Vagina (tissue), 2 donors: ENCODE measurements at regions of chr20 and their contacts with region 1.

Region 1: DNA sequence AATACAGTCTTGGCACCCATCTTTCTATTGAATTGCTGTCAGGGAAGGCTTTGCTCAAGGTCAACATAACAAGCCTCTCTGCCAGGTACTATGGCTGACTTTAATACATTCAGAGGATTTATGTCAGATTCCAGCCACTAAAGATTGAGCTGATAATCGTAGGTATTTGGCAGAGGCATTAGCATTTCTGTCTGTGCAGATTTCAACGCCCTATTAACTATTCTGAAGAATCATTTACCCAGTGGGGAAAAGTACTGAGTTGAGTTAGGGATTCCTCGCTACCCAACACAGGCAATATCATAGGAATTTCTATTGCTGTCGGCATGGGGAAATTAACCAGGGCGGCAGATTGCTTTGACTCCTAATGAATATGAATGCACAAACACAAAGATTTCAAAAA is 233.7 kb upstream of the SPTLC3 start:
- DNase-seq: no peak
- H3K4me3 ChIP-seq: no peak overlapping the region
- H3K27ac ChIP-seq: no peak overlapping the region
- H3K4me1 ChIP-seq: no peaks in the 10 kb centered on the region
- H3K27me3 ChIP-seq: no peaks in the 10 kb centered on the region
- CTCF ChIP-seq: no peak
- POLR2A ChIP-seq: no peak

Region 2: GRCh38 chr20:12687476-12687875 is 87.6 kb before region 1 on chr20:
- intact Hi-C with region 1: no loop called
- DNase-seq: no peak
- H3K4me3 ChIP-seq: no peak overlapping the region
- H3K27ac ChIP-seq: no peak overlapping the region
- H3K4me1 ChIP-seq: no peaks in the 10 kb centered on the region
- H3K27me3 ChIP-seq: no peaks in the 10 kb centered on the region
- CTCF ChIP-seq: no peak
- POLR2A ChIP-seq: no peak

Region 3: DNA sequence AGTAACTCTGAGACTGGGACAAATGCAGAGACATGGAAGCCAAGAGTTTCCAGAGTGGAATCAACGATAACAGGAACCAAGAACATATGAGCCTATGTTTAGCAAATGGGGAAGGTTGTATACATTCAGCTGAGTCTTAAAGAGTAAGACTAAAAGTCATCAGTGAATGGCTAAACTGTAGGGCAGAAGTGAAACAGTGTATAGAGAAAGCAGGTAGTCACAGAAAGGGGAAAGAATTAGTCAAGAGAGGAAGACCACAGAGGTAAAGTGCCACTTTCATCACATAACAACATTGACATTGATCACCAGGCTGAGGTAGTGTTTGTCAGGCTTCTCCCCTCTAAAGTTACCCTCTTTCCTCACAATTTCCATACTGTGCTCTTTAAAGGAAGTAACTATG is 72.7 kb before region 1 on chr20:
- intact Hi-C with region 1: no loop called
- DNase-seq: no peak
- H3K4me3 ChIP-seq: no peak overlapping the region
- H3K27ac ChIP-seq: no peak overlapping the region
- H3K4me1 ChIP-seq: no peaks in the 10 kb centered on the region
- H3K27me3 ChIP-seq: no peaks in the 10 kb centered on the region
- CTCF ChIP-seq: no peak
- POLR2A ChIP-seq: no peak

Region 4: DNA sequence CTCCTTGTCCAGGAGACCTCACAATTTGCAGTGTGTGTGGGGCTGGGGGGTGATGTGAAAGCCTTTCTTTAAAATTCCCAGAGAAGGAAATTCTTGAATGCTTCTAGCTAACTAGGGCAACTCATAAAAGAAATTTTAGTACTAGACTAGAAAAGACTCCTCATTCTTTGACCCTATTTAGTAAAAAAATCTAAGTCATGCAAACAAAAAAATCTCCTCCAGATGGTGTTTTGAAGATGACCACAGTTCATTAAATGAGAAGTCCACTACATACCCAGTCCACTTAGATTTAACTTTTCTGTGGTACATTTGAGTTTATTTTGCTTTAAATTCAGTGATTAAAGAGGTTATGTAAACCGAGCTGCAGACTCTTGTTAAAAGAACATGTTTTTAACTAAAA is 1077.3 kb after region 1 on chr20:
- intact Hi-C with region 1: loop called (anchors 5 kb)
- DNase-seq: no peak
- H3K4me3 ChIP-seq: no peak overlapping the region
- H3K27ac ChIP-seq: peak overlapping the region; percentile 74
- H3K4me1 ChIP-seq: peaks cover 11% of the 10 kb centered on the region
- H3K27me3 ChIP-seq: no peaks in the 10 kb centered on the region
- CTCF ChIP-seq: no peak
- POLR2A ChIP-seq: no peak